Calu3 (cell line): ENCODE measurements at regions of chr4 and their contacts with region 1.

Region 1: GRCh38 chr4:48681856-48682255 is 98.2 kb downstream of the FRYL start:
- DNase-seq: peak; percentile 28
- H3K4me3 Mint-ChIP-seq: no peak overlapping the region
- H3K27ac Mint-ChIP-seq: peak overlapping the region; percentile 87
- H3K4me1 Mint-ChIP-seq: peaks cover 9% of the 10 kb centered on the region
- H3K27me3 Mint-ChIP-seq: no peaks in the 10 kb centered on the region
- CTCF ChIP-seq: peak; percentile 23

Region 2: GRCh38 chr4:48578132-48578968 is 103.5 kb before region 1 on chr4:
- CTCF ChIA-PET with region 1: interaction called, 8 read pairs
- intact Hi-C with region 1: loop called (anchors 1 kb)
- DNase-seq: peak; percentile 53
- H3K4me3 Mint-ChIP-seq: no peak overlapping the region
- H3K27ac Mint-ChIP-seq: no peak overlapping the region
- H3K4me1 Mint-ChIP-seq: no peaks in the 10 kb centered on the region
- H3K27me3 Mint-ChIP-seq: no peaks in the 10 kb centered on the region
- CTCF ChIP-seq: peak; percentile 32

Region 3: DNA sequence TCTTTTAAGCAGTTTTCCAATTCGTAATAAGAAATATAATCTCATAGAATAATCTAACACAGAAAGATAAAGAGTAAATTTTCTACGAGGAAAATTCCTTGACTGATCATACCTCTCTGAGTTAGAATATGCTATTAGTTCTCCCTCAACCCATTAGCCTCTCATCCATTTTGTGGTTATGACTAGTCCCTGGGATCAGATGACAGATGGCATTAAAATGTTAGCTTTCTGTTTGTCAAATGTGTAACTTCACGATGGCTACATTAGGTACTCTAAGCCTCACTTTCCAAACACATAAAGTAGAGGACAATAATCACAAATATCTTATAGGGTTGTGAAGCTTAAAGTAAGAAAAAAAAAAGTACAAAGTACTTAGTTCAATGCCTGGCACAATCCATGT is 79.6 kb before region 1 on chr4:
- CTCF ChIA-PET with region 1: no interaction called
- intact Hi-C with region 1: loop called (anchors 2 kb)
- DNase-seq: peak; percentile 1
- H3K4me3 Mint-ChIP-seq: no peak overlapping the region
- H3K27ac Mint-ChIP-seq: peak overlapping the region; percentile 69
- H3K4me1 Mint-ChIP-seq: peaks cover 19% of the 10 kb centered on the region
- H3K27me3 Mint-ChIP-seq: no peaks in the 10 kb centered on the region
- CTCF ChIP-seq: no peak

Region 4: DNA sequence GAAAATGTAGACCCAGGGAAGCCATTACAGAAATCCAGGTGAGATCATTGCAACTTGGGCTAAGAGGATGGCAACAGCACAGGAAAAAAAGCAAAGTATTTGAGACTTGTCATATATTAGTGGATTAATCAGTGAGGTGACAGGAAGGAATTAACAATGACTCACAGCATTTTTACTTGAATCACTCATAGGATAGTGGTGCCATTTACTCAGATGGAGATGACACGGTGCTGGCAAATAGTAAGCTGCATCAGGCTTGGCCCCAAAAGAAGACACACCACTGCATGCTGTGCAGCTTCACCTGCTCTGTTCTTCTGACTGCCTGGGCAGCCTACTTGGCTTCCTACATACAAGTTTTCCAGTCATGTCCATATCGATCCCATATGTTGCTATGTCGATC is 46.5 kb before region 1 on chr4:
- CTCF ChIA-PET with region 1: no interaction called
- intact Hi-C with region 1: loop called (anchors 5 kb)
- DNase-seq: no peak
- H3K4me3 Mint-ChIP-seq: no peak overlapping the region
- H3K27ac Mint-ChIP-seq: no peak overlapping the region
- H3K4me1 Mint-ChIP-seq: peaks cover 11% of the 10 kb centered on the region
- H3K27me3 Mint-ChIP-seq: no peaks in the 10 kb centered on the region
- CTCF ChIP-seq: no peak

Region 5: GRCh38 chr4:48766131-48766792 is 84.4 kb after region 1 on chr4:
- CTCF ChIA-PET with region 1: no interaction called
- intact Hi-C with region 1: no loop called
- DNase-seq: no peak
- H3K4me3 Mint-ChIP-seq: no peak overlapping the region
- H3K27ac Mint-ChIP-seq: no peak overlapping the region
- H3K4me1 Mint-ChIP-seq: peaks cover 2% of the 10 kb centered on the region
- H3K27me3 Mint-ChIP-seq: no peaks in the 10 kb centered on the region
- CTCF ChIP-seq: no peak